Activated CD4-positive, alpha-beta T cell treated with anti-CD3 and anti-CD28 coated beads, Interleukin-2, amount 10 ng/mL, durations not matched to agents 24 days and 14 days (primary cell): ENCODE measurements at regions of chr14 and their contacts with region 1.

Region 1: DNA sequence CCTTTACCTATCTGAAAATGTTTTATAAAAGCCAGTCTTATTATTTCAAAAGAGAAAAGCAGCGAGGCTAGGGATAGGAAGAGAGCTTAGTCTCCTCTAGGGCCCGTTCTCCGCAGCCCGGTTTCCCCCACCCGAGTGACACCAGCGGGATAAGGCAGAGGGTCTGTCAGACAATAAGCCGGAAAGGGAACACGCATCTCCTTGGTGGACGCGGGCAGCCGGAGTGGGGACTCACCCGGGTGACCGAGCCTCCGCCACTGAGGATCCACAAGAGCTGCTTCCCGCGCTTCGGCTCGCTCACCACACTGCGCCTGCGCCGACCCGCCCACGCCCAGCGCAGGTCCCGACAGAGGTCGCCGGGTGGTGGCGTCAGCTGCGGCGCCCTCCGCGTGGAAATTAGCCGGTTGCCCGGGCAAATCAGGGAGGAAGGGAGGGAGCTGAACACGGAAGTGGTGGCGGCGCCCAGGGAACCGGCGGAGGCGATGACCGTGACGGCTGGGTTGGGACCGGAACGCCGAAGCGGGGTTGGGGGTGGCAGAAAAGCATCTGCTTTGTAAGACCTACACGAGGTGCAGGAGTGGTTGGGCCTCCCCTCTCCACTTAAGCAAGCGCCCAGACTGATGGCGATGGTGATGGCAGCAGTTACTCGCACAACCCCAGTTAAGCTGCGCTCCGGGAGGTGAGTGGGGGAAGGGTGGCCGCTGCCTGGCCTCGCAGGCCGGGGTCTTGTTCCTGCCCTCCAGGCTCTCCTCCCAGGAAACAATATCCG is at the starts of genes SOCS4 and WDHD1:
- DNase-seq: peak; percentile 99
- H3K4me3 Mint-ChIP-seq: peak within 1 kb of the TSS; percentile 87
- H3K27ac Mint-ChIP-seq: peak within 1 kb of the TSS; percentile 96
- H3K4me1 Mint-ChIP-seq: peaks cover 44% of the 10 kb centered on the region
- H3K27me3 Mint-ChIP-seq: no peaks in the 10 kb centered on the region
- total RNA-seq, gene SOCS4: 36.4 and 39.6 TPM in 2 replicates
- total RNA-seq, gene WDHD1: 60.7 and 63.0 TPM in 2 replicates

Region 2: GRCh38 chr14:54488646-54489317 is 538.2 kb before region 1 on chr14 and contains the start of gene GMFB:
- intact Hi-C with region 1: loop called (anchors 10 kb)
- DNase-seq: peak; percentile 96
- H3K4me3 Mint-ChIP-seq: peak within 1 kb of the TSS; percentile 89
- H3K27ac Mint-ChIP-seq: peak within 1 kb of the TSS; percentile 86
- H3K4me1 Mint-ChIP-seq: peaks cover 47% of the 10 kb centered on the region
- H3K27me3 Mint-ChIP-seq: peaks cover 3% of the 10 kb centered on the region
- total RNA-seq, gene GMFB: 40.9 and 41.1 TPM in 2 replicates

Region 3: DNA sequence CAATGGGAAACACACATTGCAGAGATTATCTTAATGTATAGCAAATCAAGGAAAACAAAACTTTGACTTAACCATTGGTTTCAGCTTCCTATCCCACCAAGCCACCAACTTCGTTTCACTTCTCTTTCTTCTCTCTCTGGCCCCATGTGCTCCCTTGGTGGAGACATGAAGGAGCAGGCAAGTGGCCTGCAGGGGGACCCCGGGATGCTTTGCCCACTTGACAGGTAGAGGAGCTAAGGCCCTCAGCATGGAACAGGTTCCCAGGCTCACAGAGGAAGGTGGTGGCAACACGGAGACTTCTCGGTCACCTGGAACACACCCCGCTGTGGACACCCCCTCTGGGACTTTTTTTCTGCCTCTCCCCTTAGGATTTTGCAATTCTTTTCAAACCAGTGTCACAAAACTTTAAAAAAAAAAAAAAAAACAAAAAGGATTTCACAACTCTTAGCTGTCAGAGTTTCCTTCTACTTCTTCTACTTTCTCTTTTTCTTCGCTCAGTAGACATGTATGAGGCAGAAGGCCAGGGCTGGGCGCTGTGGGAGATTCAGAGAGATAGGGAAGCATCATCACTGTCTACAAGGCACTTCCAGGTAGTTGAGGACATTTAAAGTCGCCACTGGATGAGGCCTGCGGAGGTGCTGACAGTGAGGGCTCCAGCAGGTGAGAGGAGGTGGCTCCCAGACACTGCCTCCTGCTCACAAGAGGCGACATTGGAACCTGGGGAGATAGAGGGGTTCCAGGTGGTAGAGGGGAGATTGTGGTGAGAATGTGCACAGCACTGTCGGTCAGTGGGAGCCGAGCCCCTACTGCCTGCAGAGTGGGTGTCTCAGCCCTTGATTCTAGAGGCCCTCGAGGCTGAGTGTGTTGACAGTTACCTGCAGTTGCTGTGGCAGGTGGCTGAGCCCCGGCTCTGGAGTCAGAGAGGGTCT is 244.0 kb before region 1 on chr14:
- intact Hi-C with region 1: no loop called
- DNase-seq: peak; percentile 64
- H3K4me3 Mint-ChIP-seq: no peak overlapping the region
- H3K27ac Mint-ChIP-seq: no peak overlapping the region
- H3K4me1 Mint-ChIP-seq: peaks cover 19% of the 10 kb centered on the region
- H3K27me3 Mint-ChIP-seq: peaks cover 3% of the 10 kb centered on the region

Region 4: GRCh38 chr14:55051426-55052268 is 24.7 kb after region 1 on chr14 and contains the start of gene MAPK1IP1L:
- intact Hi-C with region 1: loop called (anchors 1 kb)
- DNase-seq: peak; percentile 98
- H3K4me3 Mint-ChIP-seq: peak within 1 kb of the TSS; percentile 93
- H3K27ac Mint-ChIP-seq: peak within 1 kb of the TSS; percentile 96
- H3K4me1 Mint-ChIP-seq: peaks cover 36% of the 10 kb centered on the region
- H3K27me3 Mint-ChIP-seq: no peaks in the 10 kb centered on the region
- total RNA-seq, gene MAPK1IP1L: 142 and 144 TPM in 2 replicates

Region 5: GRCh38 chr14:55191203-55192053 is 164.5 kb after region 1 on chr14 and contains the start of gene DLGAP5:
- intact Hi-C with region 1: loop called (anchors 1 kb)
- DNase-seq: peak; percentile 97
- H3K4me3 Mint-ChIP-seq: peak within 1 kb of the TSS; percentile 94
- H3K27ac Mint-ChIP-seq: peak within 1 kb of the TSS; percentile 87
- H3K4me1 Mint-ChIP-seq: peaks cover 38% of the 10 kb centered on the region
- H3K27me3 Mint-ChIP-seq: no peaks in the 10 kb centered on the region
- total RNA-seq, gene DLGAP5: 28.7 and 32.4 TPM in 2 replicates